Activated T-helper 1 cell treated with anti-CD3 and anti-CD28 coated beads, Interleukin-12 subunit alpha, Interleukin-12 subunit beta, Interleukin-2, Interleukin-4 antibody, amounts not matched to agents 30 ng/mL and 10 ng/mL and 1 ng/mL, durations not matched to agents 14 hours and 24 hours and 36 hours (primary cell): ENCODE measurements at regions of chr2 and their contacts with region 1.

Region 1: GRCh38 chr2:239401067-239401880 is 454 bp upstream of the HDAC4 start:
- DNase-seq: peak; percentile 99
- H3K4me3 Mint-ChIP-seq: peak overlapping the region; percentile 94
- H3K27ac Mint-ChIP-seq: peak overlapping the region; percentile 99
- H3K4me1 Mint-ChIP-seq: peaks cover 40% of the 10 kb centered on the region
- H3K27me3 Mint-ChIP-seq: peaks cover 17% of the 10 kb centered on the region

Region 2: DNA sequence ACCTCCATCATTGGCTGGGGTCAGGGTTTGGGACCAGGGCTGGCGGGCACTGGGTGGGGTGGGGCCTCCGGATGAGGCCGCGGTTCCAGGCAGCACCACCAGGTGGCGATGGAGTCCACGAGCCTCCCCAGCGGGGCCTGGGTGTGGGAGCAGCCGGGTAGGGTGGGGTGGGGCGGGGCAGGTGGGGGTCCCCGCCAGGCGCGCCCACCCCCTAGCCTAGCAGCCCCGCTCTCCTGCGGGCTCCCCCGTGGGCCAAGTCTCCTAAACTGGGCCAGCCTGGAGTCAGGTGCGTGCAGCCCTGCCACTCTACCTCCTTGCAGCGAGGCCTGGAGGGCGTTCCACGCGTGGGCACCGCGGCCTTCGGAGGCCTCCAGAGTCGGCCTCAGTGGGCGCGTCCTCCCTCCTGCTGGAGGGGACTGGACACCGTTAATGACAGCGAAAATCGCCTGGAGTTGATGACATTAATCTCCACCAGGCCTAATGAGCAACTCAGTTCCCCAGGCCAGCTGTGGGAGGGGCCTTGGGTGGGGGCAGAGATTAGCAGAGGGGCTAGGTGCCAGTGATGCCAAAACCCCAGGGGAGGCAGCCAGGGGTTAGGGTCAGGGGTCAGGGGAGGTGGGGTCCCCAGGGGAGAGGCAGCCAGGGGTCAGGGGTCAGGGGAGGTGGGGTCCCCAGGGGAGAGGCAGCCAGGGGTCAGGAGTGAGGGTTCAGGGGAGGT is 365.8 kb before region 1 on chr2:
- intact Hi-C with region 1: loop called (anchors 1 kb)
- DNase-seq: peak; percentile 40
- H3K4me3 Mint-ChIP-seq: no peak overlapping the region
- H3K27ac Mint-ChIP-seq: no peak overlapping the region
- H3K4me1 Mint-ChIP-seq: no peaks in the 10 kb centered on the region
- H3K27me3 Mint-ChIP-seq: peaks cover 20% of the 10 kb centered on the region

Region 3: DNA sequence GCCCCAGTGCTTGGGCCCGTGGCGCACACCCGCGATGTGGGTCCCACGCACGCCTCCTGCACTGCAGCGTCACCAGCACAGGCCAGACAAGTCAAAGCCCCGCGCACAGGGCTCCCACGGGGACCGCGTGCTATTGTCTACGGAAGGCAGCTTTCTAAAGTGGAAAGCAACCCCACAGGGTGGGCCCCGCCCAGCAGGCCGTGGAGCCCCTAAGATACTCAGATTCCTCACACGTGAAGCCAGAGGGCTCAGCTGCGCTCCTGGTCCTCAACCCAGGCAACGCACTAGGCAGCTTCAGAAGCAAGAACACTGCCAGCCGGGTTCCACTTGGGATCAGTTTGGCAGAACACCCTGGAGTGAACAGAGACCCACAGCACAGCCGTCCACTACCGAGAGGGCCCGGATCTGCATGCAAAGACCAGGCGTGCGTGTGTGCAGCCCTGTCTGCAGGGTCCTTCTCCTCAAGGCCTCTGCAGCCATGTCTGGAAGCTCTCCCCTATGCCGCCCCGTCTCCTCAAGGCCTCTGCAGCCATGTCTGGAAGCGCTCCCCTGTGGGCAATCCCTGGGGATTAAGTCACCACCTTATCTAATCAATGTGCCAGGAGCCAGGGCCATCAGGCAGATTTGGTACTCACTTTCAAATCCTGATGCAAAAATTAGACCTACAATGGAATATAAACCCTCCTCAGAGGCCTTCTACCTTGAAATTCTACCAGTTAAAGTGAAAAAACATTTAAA is 231.8 kb before region 1 on chr2:
- intact Hi-C with region 1: loop called (anchors 5 kb)
- DNase-seq: no peak
- H3K4me3 Mint-ChIP-seq: no peak overlapping the region
- H3K27ac Mint-ChIP-seq: no peak overlapping the region
- H3K4me1 Mint-ChIP-seq: peaks cover 39% of the 10 kb centered on the region
- H3K27me3 Mint-ChIP-seq: no peaks in the 10 kb centered on the region

Region 4: GRCh38 chr2:239288951-239289511 is 112.2 kb before region 1 on chr2:
- intact Hi-C with region 1: loop called (anchors 1 kb)
- DNase-seq: peak; percentile 61
- H3K4me3 Mint-ChIP-seq: peak overlapping the region; percentile 77
- H3K27ac Mint-ChIP-seq: peak overlapping the region; percentile 98
- H3K4me1 Mint-ChIP-seq: peaks cover 78% of the 10 kb centered on the region
- H3K27me3 Mint-ChIP-seq: peaks cover 7% of the 10 kb centered on the region

Region 5: GRCh38 chr2:239369631-239370161 is 31.6 kb before region 1 on chr2:
- intact Hi-C with region 1: loop called (anchors 1 kb)
- DNase-seq: peak; percentile 83
- H3K4me3 Mint-ChIP-seq: no peak overlapping the region
- H3K27ac Mint-ChIP-seq: peak overlapping the region; percentile 92
- H3K4me1 Mint-ChIP-seq: peaks cover 26% of the 10 kb centered on the region
- H3K27me3 Mint-ChIP-seq: no peaks in the 10 kb centered on the region

Region 6: DNA sequence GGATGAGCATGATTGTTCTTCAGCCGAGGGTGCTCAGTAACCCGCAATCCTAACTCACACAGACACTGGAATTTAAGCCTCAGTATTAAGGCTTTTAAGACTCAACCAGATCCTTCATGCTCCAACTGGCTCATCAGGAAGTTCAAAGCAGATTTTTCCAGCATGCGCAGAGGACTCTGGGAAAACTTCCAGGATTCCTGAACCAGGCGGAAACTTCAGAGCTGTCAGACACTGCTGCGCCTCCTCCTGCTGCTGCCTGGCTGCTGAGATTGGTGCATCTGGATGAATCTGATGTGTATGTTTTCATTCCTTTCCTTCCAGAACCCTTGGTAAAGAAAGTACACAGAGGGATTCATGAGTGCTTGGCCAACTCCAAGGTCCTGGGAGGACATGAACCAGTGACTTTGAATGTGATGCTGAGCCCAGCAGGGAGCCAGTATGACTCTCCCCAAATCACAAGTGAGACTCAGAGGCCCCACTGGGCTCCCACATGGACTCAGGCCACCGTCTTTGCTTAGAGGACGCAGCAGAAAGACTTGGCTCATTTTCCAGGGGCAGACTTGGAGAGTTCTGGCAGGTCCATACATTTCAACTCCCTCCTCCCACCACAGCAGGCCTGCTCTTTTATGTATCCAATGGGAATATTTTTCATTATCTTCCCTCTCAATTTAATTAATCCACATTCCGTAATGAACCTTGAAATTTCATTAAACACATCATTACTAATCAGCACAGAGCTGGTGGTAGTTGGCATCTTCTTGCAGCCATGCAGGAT is 143.1 kb after region 1 on chr2:
- intact Hi-C with region 1: loop called (anchors 5 kb)
- DNase-seq: no peak
- H3K4me3 Mint-ChIP-seq: no peak overlapping the region
- H3K27ac Mint-ChIP-seq: no peak overlapping the region
- H3K4me1 Mint-ChIP-seq: peaks cover 35% of the 10 kb centered on the region
- H3K27me3 Mint-ChIP-seq: peaks cover 27% of the 10 kb centered on the region

Region 7: DNA sequence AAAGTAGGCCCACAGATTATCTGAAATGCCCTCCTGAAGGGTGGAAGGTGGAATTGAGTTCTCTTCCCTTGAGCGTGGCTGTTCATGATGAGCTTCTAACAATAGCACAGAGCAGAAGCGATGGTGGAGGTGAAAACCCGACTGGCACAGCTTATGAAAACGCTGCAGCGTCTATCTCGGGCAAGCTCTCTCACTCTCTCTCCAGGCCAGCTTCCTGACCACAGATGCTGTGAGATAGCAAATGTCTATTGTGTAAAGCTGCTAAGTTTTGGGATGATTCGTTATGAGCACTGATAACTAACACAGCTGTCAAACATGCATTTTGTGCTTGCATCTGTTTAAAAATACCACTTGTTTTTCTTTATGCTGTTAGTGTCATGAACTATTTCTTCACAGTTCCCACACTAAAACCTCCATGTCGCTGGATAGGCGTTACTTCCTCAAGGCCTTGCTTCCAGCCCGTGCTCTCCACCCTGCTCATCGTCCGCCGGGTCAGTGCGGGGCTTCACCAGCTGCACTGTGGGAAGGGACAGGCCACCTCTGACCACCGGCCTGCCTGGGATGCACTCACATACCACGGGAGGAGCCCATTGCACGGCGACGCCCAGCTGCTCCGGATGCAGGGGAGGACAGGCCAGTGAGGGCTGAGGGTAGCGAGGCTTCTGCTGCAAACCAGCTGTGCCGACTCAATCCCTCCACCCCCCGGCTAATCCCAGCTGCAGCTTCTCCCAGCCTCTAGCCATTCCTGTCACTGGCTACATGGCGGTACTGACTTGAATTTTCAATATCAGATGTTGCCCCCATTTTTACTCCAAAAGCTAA is 799.2 kb after region 1 on chr2:
- intact Hi-C with region 1: no loop called
- DNase-seq: no peak
- H3K4me3 Mint-ChIP-seq: no peak overlapping the region
- H3K27ac Mint-ChIP-seq: no peak overlapping the region
- H3K4me1 Mint-ChIP-seq: peaks cover 6% of the 10 kb centered on the region
- H3K27me3 Mint-ChIP-seq: peaks cover 4% of the 10 kb centered on the region